CD4-positive, alpha-beta T cell (primary cell): ENCODE measurements at regions of chr7 and their contacts with region 1.

Region 1: DNA sequence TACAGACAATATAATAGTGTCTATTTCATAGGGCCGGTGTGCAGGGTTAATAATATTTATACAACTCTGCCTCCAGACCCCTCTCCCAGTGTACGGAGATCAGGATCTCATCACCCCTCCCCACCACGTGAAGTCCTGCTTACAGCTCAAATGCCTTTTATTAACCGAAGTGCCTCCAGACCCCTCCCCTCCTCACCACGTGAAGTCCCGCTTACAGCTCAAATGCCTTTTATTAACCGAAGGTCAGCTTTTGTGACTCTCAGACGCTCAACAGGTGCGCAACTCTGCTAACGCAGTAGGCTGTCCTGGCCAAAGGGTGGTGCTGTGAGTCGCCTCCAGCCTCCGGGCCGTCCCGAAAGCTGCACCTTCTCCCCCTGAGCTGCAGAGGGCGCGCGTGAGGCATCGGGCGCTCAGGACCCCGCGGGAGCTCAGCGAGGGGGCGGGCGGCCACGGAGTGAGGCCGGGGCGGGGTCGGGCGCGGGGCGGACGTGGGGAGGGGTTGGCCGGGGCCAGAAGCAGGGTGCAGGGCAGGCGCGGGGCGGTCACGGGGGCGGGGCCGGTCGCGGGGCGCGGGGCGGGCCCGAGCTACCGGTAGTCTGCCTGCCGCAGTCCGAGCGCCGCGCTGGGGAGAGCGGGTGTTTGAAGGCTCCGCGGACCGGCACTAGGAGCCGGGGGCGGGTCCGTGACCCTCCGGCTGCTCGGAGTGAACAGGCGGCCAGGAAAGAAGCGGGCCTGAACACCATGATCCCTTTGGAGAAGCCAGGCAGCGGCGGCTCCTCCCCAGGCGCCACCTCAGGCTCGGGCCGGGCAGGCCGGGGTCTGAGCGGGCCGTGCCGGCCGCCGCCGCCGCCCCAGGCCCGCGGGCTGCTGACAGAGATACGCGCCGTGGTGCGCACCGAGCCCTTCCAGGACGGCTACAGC is at the start of gene STK17A:
- DNase-seq: peak; percentile 86 to 98 (median 94)
- ATAC-seq: peak; percentile 71
- H3K4me3 ChIP-seq: peak within 1 kb of the TSS; percentile 77
- H3K4me3 Mint-ChIP-seq: peak within 1 kb of the TSS; percentile 95
- H3K27ac ChIP-seq: peak within 1 kb of the TSS; percentile 87 to 97
- H3K27ac Mint-ChIP-seq: peak within 1 kb of the TSS; percentile 98
- H3K4me1 ChIP-seq: peaks cover 10% of the 10 kb centered on the region
- H3K4me1 Mint-ChIP-seq: peaks cover 38% of the 10 kb centered on the region
- H3K27me3 ChIP-seq: no peaks in the 10 kb centered on the region
- H3K27me3 Mint-ChIP-seq: peaks cover 21% of the 10 kb centered on the region
- CTCF ChIP-seq: peak; percentile 85
- total RNA-seq, gene STK17A: 213 to 218 TPM

Region 2: GRCh38 chr7:42931834-42932651 is 650.7 kb before region 1 on chr7 and contains the starts of genes MRPL32 and PSMA2:
- CTCF ChIA-PET with region 1: interaction called, 5 read pairs
- POLR2A ChIA-PET with region 1: interaction called, 8 read pairs
- intact Hi-C with region 1: loop called in 1 of 2 experiments (anchors 5 kb)
- DNase-seq: peak; percentile 88 to 98 (median 91)
- ATAC-seq: peak; percentile 98
- H3K4me3 ChIP-seq: peak within 1 kb of the TSS; percentile 87
- H3K4me3 Mint-ChIP-seq: peak within 1 kb of the TSS; percentile 92
- H3K27ac ChIP-seq: peak within 1 kb of the TSS; percentile 74 to 87
- H3K27ac Mint-ChIP-seq: peak within 1 kb of the TSS; percentile 92
- H3K4me1 ChIP-seq: peaks cover 28% of the 10 kb centered on the region
- H3K4me1 Mint-ChIP-seq: peaks cover 79% of the 10 kb centered on the region
- H3K27me3 ChIP-seq: no peaks in the 10 kb centered on the region
- H3K27me3 Mint-ChIP-seq: no peaks in the 10 kb centered on the region
- CTCF ChIP-seq: no peak
- total RNA-seq, gene MRPL32: 57.1 to 60.7 TPM
- total RNA-seq, gene PSMA2: 38.8 to 41.0 TPM

Region 3: DNA sequence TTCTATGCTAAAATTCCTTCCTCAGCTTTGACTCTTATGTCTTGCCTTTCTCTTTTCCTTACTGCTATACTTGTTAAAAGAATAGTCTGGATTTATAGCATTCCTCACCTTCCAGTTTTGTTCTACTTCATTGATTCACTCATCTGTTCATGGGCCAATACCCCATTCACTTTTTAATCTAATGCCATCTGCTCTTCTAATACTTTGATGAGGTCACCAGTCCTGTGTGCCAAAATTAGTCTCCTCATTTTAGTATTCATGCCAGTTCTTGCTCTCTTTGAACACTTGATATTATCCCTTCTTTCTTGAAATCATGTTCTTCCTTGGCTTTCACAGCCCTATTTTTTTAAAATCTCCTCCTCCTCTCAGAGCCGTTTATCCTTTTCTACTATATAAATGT is 19.5 kb after region 1 on chr7:
- CTCF ChIA-PET with region 1: interaction called, 64 read pairs
- POLR2A ChIA-PET with region 1: interaction called, 8 read pairs
- intact Hi-C with region 1: loop called (anchors 2 kb)
- DNase-seq: no peak
- ATAC-seq: no peak
- H3K4me3 ChIP-seq: no peak overlapping the region
- H3K4me3 Mint-ChIP-seq: no peak overlapping the region
- H3K27ac ChIP-seq: peak overlapping the region in 1 of 2 donors; percentile 26
- H3K27ac Mint-ChIP-seq: no peak overlapping the region
- H3K4me1 ChIP-seq: peaks cover 45% of the 10 kb centered on the region
- H3K4me1 Mint-ChIP-seq: peaks cover 50% of the 10 kb centered on the region
- H3K27me3 ChIP-seq: no peaks in the 10 kb centered on the region
- H3K27me3 Mint-ChIP-seq: no peaks in the 10 kb centered on the region
- CTCF ChIP-seq: no peak

Region 4: GRCh38 chr7:43631559-43631958 is 48.8 kb after region 1 on chr7:
- CTCF ChIA-PET with region 1: interaction called, 58 read pairs
- POLR2A ChIA-PET with region 1: interaction called, 39 read pairs
- intact Hi-C with region 1: loop called in 1 of 2 experiments (anchors 5 kb)
- DNase-seq: no peak
- ATAC-seq: peak; percentile 40
- H3K4me3 ChIP-seq: no peak overlapping the region
- H3K4me3 Mint-ChIP-seq: peak overlapping the region; percentile 70
- H3K27ac ChIP-seq: no peak overlapping the region
- H3K27ac Mint-ChIP-seq: no peak overlapping the region
- H3K4me1 ChIP-seq: peaks cover 38% of the 10 kb centered on the region
- H3K4me1 Mint-ChIP-seq: peaks cover 95% of the 10 kb centered on the region
- H3K27me3 ChIP-seq: no peaks in the 10 kb centered on the region
- H3K27me3 Mint-ChIP-seq: no peaks in the 10 kb centered on the region
- CTCF ChIP-seq: no peak

Region 5: GRCh38 chr7:43669286-43670081 is 86.7 kb after region 1 on chr7:
- CTCF ChIA-PET with region 1: interaction called, 46 read pairs
- POLR2A ChIA-PET with region 1: interaction called, 11 read pairs
- intact Hi-C with region 1: no loop called
- DNase-seq: peak; percentile 42 to 92 (median 56)
- ATAC-seq: peak; percentile 82
- H3K4me3 ChIP-seq: peak overlapping the region; percentile 37
- H3K4me3 Mint-ChIP-seq: peak overlapping the region; percentile 82
- H3K27ac ChIP-seq: peak overlapping the region in 1 of 2 donors; percentile 75
- H3K27ac Mint-ChIP-seq: peak overlapping the region; percentile 86
- H3K4me1 ChIP-seq: peaks cover 22% of the 10 kb centered on the region
- H3K4me1 Mint-ChIP-seq: peaks cover 88% of the 10 kb centered on the region
- H3K27me3 ChIP-seq: no peaks in the 10 kb centered on the region
- H3K27me3 Mint-ChIP-seq: no peaks in the 10 kb centered on the region
- CTCF ChIP-seq: no peak

Region 6: GRCh38 chr7:43700059-43700501 is 117.3 kb after region 1 on chr7:
- CTCF ChIA-PET with region 1: interaction called, 323 read pairs
- POLR2A ChIA-PET with region 1: interaction called, 254 read pairs
- intact Hi-C with region 1: loop called (anchors 1 kb)
- DNase-seq: peak in 3 of 14 experiments; percentile 77 to 80 (median 80)
- ATAC-seq: peak; percentile 76
- H3K4me3 ChIP-seq: no peak overlapping the region
- H3K4me3 Mint-ChIP-seq: peak overlapping the region; percentile 52
- H3K27ac ChIP-seq: peak overlapping the region in 1 of 2 donors; percentile 4
- H3K27ac Mint-ChIP-seq: peak overlapping the region; percentile 66
- H3K4me1 ChIP-seq: peaks cover 6% of the 10 kb centered on the region
- H3K4me1 Mint-ChIP-seq: peaks cover 58% of the 10 kb centered on the region
- H3K27me3 ChIP-seq: no peaks in the 10 kb centered on the region
- H3K27me3 Mint-ChIP-seq: no peaks in the 10 kb centered on the region
- CTCF ChIP-seq: peak; percentile 83

Region 7: GRCh38 chr7:43729214-43729923 is 146.6 kb after region 1 on chr7 and contains the start of gene COA1:
- CTCF ChIA-PET with region 1: interaction called, 45 read pairs
- POLR2A ChIA-PET with region 1: interaction called, 19 read pairs
- intact Hi-C with region 1: no loop called
- DNase-seq: peak; percentile 68 to 94 (median 74)
- ATAC-seq: peak; percentile 93
- H3K4me3 ChIP-seq: peak within 1 kb of the TSS; percentile 98
- H3K4me3 Mint-ChIP-seq: peak within 1 kb of the TSS; percentile 96
- H3K27ac ChIP-seq: peak within 1 kb of the TSS; percentile 75
- H3K27ac Mint-ChIP-seq: peak within 1 kb of the TSS; percentile 91
- H3K4me1 ChIP-seq: peaks cover 24% of the 10 kb centered on the region
- H3K4me1 Mint-ChIP-seq: peaks cover 55% of the 10 kb centered on the region
- H3K27me3 ChIP-seq: no peaks in the 10 kb centered on the region
- H3K27me3 Mint-ChIP-seq: no peaks in the 10 kb centered on the region
- CTCF ChIP-seq: no peak
- total RNA-seq, gene COA1: 78.9 to 80.7 TPM